HepG2 (cell line): ENCODE measurements at regions of chr15 and their contacts with region 1.

Region 1: GRCh38 chr15:33292717-33293307 is 18.0 kb upstream of the RYR3 start:
- DNase-seq: peak; percentile 51
- ATAC-seq: peak; percentile 71
- H3K4me3 ChIP-seq: no peak overlapping the region
- H3K27ac ChIP-seq: no peak overlapping the region
- H3K4me1 ChIP-seq: no peaks in the 10 kb centered on the region
- H3K27me3 ChIP-seq: peaks cover 1 to 7% of the 10 kb centered on the region in 2 experiments; a peak in 2 of 5 replicates
- CTCF ChIP-seq: peak; percentile 66
- EP300 ChIP-seq: no peak
- POLR2A ChIP-seq: no peak
- RAD21 ChIP-seq: no peak

Region 2: GRCh38 chr15:32936283-32936918 is 356.4 kb before region 1 on chr15:
- CTCF ChIA-PET with region 1: no interaction called
- POLR2A ChIA-PET with region 1: no interaction called
- in situ Hi-C with region 1: no loop called
- intact Hi-C with region 1: no loop called
- DNase-seq: peak; percentile 16
- ATAC-seq: peak; percentile 68
- H3K4me3 ChIP-seq: no peak overlapping the region
- H3K27ac ChIP-seq: no peak overlapping the region
- H3K4me1 ChIP-seq: no peaks in the 10 kb centered on the region
- H3K27me3 ChIP-seq: no peaks in the 10 kb centered on the region
- CTCF ChIP-seq: peak; percentile 53
- EP300 ChIP-seq: no peak
- POLR2A ChIP-seq: no peak
- RAD21 ChIP-seq: no peak

Region 3: DNA sequence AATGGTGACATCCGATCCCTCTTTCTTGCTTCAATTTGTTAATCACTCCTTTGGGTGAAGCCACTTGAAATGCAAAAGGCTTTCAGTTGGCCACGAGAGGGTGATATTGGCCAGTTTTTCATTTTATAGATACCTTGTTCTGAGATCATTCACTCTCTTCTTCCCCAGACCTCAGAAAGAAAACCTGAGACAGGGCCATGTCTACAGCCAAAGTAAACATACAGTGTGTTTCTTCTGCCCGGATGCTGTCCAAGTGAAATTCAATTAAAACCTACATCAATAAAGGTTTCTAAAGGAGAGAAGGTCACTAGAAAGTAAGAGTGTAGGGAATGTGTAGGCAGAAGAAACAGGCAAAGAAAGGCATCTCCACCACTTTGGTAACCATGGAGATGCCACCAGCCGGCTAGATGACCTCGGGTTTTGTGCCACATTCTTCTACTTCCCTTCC is 58.8 kb before region 1 on chr15:
- CTCF ChIA-PET with region 1: no interaction called
- POLR2A ChIA-PET with region 1: no interaction called
- in situ Hi-C with region 1: loop called (anchors 10 kb)
- intact Hi-C with region 1: no loop called
- DNase-seq: peak; percentile 15
- ATAC-seq: peak; percentile 46; the same call in 1 of the 3 replicates
- H3K4me3 ChIP-seq: no peak overlapping the region
- H3K27ac ChIP-seq: no peak overlapping the region
- H3K4me1 ChIP-seq: no peaks in the 10 kb centered on the region
- H3K27me3 ChIP-seq: no peaks in the 10 kb centered on the region
- CTCF ChIP-seq: peak; percentile 35; the same call in 1 of the 2 replicates
- EP300 ChIP-seq: no peak
- POLR2A ChIP-seq: no peak
- RAD21 ChIP-seq: no peak

Region 4: GRCh38 chr15:33310481-33311311 is 17.9 kb after region 1 on chr15 and contains the start of gene RYR3:
- CTCF ChIA-PET with region 1: no interaction called
- POLR2A ChIA-PET with region 1: no interaction called
- in situ Hi-C with region 1: no loop called
- intact Hi-C with region 1: no loop called
- DNase-seq: no peak
- ATAC-seq: no peak
- H3K4me3 ChIP-seq: no peak within 1 kb of the TSS
- H3K27ac ChIP-seq: no peak within 1 kb of the TSS
- H3K4me1 ChIP-seq: no peaks in the 10 kb centered on the region
- H3K27me3 ChIP-seq: peaks cover 0 to 18% of the 10 kb centered on the region in 2 experiments; a peak in 1 of 5 replicates
- CTCF ChIP-seq: no peak
- EP300 ChIP-seq: no peak
- POLR2A ChIP-seq: no peak
- RAD21 ChIP-seq: no peak
- total RNA-seq, gene RYR3: not detected in 2 replicates

Region 5: DNA sequence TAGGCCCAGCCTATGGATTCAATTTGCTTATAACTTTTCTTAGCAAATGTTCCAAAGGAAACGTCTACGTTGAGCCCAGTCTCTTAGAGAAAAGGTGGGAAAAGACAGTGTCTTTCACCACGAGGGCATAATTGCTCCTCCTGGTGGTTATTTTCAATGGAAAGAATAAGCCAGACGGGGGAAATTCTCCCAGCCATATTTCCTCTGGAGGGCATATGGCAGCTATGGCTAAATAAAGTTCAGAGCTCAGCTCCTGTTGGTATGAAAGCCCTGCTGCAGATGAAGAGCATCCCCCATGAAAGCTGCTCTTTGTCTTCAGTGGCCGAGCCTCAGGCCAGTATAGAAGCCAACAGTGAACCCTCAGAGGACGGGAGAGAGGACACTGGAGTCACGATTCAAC is 315.9 kb after region 1 on chr15:
- CTCF ChIA-PET with region 1: no interaction called
- POLR2A ChIA-PET with region 1: no interaction called
- in situ Hi-C with region 1: no loop called
- intact Hi-C with region 1: loop called (anchors 1 kb)
- DNase-seq: peak; percentile 3
- ATAC-seq: no peak; the same call in 2 of the 3 replicates
- H3K4me3 ChIP-seq: no peak overlapping the region
- H3K27ac ChIP-seq: no peak overlapping the region
- H3K4me1 ChIP-seq: no peaks in the 10 kb centered on the region
- H3K27me3 ChIP-seq: no peaks in the 10 kb centered on the region
- CTCF ChIP-seq: no peak; the same call in 1 of the 2 replicates
- EP300 ChIP-seq: no peak
- POLR2A ChIP-seq: no peak
- RAD21 ChIP-seq: no peak

Region 6: GRCh38 chr15:33700695-33701304 is 408.0 kb after region 1 on chr15:
- CTCF ChIA-PET with region 1: interaction called, 38 read pairs
- POLR2A ChIA-PET with region 1: no interaction called
- in situ Hi-C with region 1: loop called (anchors 5 kb)
- intact Hi-C with region 1: loop called (anchors 1 kb)
- DNase-seq: peak; percentile 54
- ATAC-seq: peak; percentile 96
- H3K4me3 ChIP-seq: no peak overlapping the region
- H3K27ac ChIP-seq: no peak overlapping the region
- H3K4me1 ChIP-seq: no peaks in the 10 kb centered on the region
- H3K27me3 ChIP-seq: peaks cover 0 to 4% of the 10 kb centered on the region in 2 experiments; a peak in 2 of 5 replicates
- CTCF ChIP-seq: peak; percentile 89
- EP300 ChIP-seq: no peak
- POLR2A ChIP-seq: no peak
- RAD21 ChIP-seq: peak; percentile 48; the same call in 1 of the 2 replicates